Heart right ventricle (tissue), 16 donors: ENCODE measurements at regions of chr13 and their contacts with region 1.

Region 1: GRCh38 chr13:97432917-97433726 is 847 bp upstream of the RAP2A start:
- DNase-seq: peak; percentile 98 to 99
- ATAC-seq: peak; percentile 91 to 98 (median 94)
- H3K4me3 ChIP-seq: peak overlapping the region; percentile 66 to 98 (median 84)
- H3K27ac ChIP-seq: peak overlapping the region; percentile 95 to 100 (median 99)
- H3K4me1 ChIP-seq: peaks cover 0 to 54% (median 37%) of the 10 kb centered on the region in 9 donors
- H3K27me3 ChIP-seq: no peaks in the 10 kb centered on the region
- CTCF ChIP-seq: no peak

Region 2: GRCh38 chr13:97116754-97117153 is 316.4 kb before region 1 on chr13:
- intact Hi-C with region 1: loop called in 2 of 10 experiments (anchors 5 kb)
- DNase-seq: peak in 1 of 2 donors; percentile 31
- ATAC-seq: peak; percentile 42 to 94 (median 88)
- H3K4me3 ChIP-seq: no peak overlapping the region
- H3K27ac ChIP-seq: peak overlapping the region; percentile 36 to 88 (median 68)
- H3K4me1 ChIP-seq: peaks cover 4 to 42% (median 39%) of the 10 kb centered on the region in 9 donors
- H3K27me3 ChIP-seq: peaks cover 0 to 5% (median 0%) of the 10 kb centered on the region in 7 donors
- CTCF ChIP-seq: no peak

Region 3: GRCh38 chr13:97659602-97660001 is 226.5 kb after region 1 on chr13:
- intact Hi-C with region 1: loop called in 1 of 10 experiments (anchors 5 kb)
- DNase-seq: peak in 1 of 2 donors; percentile 6
- ATAC-seq: peak in 5 of 8 donors; percentile 37 to 76 (median 74)
- H3K4me3 ChIP-seq: no peak overlapping the region
- H3K27ac ChIP-seq: no peak overlapping the region
- H3K4me1 ChIP-seq: peaks cover 0 to 40% (median 3%) of the 10 kb centered on the region in 9 donors
- H3K27me3 ChIP-seq: no peaks in the 10 kb centered on the region
- CTCF ChIP-seq: peak in 8 of 9 donors; percentile 25 to 67 (median 49)